Activated CD8-positive, alpha-beta T cell treated with anti-CD3 and anti-CD28 coated beads, Interleukin-2, amount 10 ng/mL, durations not matched to agents 7 days and 5 days (primary cell): ENCODE measurements at regions of chr12 and their contacts with region 1.

Region 1: GRCh38 chr12:3885277-3886094 is 12.3 kb upstream of the PARP11 start:
- DNase-seq: peak; percentile 65
- ATAC-seq: peak; percentile 43
- H3K4me3 Mint-ChIP-seq: no peak overlapping the region
- H3K27ac Mint-ChIP-seq: peak overlapping the region; percentile 8
- H3K4me1 Mint-ChIP-seq: peaks cover 12% of the 10 kb centered on the region
- H3K27me3 Mint-ChIP-seq: peaks cover 7% of the 10 kb centered on the region

Region 2: DNA sequence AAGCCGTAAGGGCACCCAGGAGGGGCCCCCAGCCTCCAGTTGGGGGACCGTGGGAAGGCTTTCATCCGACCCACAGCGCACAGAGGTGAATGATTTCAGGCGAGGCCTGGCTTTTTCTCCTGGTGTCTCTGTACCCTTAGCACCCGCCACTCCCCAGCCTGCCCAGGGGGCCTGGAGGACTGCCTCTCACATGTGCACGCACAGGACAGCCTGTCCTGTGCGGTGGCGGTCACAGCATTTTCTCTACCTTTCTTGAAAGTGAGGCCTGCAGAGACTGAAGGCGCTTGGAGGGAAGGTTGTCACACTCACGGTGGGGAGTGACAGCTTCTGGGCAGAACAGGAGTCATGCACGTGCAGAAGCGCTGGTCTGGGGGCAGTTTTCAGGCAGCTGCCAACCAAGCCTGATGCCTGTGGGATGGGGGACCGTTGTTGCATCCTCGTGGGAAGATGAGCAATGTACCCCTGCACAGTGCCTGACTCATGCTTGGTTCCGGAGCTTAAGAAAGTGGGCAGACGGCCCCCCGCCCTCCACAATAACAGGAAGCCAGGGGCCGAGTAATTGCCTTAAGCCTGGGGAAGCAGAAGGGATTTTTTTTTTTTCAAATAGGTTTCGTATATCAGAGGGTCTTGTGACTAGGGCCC is 660.2 kb before region 1 on chr12:
- CTCF ChIA-PET with region 1: no interaction called
- POLR2A ChIA-PET with region 1: no interaction called
- DNase-seq: no peak
- ATAC-seq: no peak
- H3K4me3 Mint-ChIP-seq: no peak overlapping the region
- H3K27ac Mint-ChIP-seq: no peak overlapping the region
- H3K4me1 Mint-ChIP-seq: peaks cover 3% of the 10 kb centered on the region
- H3K27me3 Mint-ChIP-seq: peaks cover 2% of the 10 kb centered on the region

Region 3: DNA sequence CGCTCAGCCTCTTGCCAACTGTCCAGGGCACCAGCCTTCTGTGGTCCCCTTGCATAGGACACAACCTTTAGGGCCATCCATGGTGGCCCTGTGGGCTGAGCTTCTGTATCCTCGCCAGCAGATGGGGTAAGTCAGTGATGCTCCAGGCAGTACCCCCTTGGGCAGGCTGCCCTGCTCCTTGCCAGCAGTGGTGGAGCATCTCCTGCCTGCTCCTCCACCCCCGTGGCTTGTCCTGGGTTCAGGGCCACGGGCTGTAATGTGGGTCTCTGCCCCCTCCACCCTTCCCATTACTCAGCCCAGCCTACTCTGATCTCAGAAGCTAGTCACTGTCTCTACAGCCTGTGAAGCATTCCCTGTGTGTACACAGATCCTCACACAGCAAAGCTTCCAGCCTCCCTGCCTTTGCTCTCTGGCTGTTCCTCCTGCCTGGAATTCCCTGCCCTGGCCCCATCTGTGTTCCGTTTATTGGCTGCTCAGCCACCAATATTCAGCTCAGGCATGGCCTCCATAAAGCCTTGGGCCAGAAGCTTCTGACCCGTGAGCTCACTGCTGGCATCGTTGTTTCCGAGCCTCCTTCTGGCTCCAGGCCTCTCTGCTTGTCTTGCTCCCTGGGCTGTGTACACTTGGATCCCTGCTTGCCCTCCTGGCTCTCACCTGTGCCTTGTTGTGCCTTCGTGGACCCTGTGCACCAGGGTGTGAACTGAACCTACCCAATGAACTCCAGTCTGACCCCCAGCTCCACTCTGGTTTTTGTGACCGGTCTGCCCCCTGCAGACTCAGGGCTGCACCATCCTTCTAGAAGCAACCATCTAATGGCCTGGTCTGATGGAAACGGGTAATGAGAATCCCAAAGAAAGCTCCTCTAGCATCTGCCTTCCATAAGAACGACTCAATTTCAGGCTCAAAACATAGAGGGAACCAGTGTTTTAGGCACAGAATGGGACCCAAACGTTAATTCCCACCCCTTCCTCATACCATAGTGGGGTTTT is 571.5 kb before region 1 on chr12:
- CTCF ChIA-PET with region 1: no interaction called
- POLR2A ChIA-PET with region 1: no interaction called
- DNase-seq: peak; percentile 28
- ATAC-seq: peak; percentile 85
- H3K4me3 Mint-ChIP-seq: no peak overlapping the region
- H3K27ac Mint-ChIP-seq: no peak overlapping the region
- H3K4me1 Mint-ChIP-seq: no peaks in the 10 kb centered on the region
- H3K27me3 Mint-ChIP-seq: peaks cover 2% of the 10 kb centered on the region

Region 4: GRCh38 chr12:3872800-3873636 is 12.5 kb before region 1 on chr12 and contains the start of gene PARP11:
- CTCF ChIA-PET with region 1: interaction called, 15 read pairs
- POLR2A ChIA-PET with region 1: no interaction called
- DNase-seq: peak; percentile 99
- ATAC-seq: peak; percentile 94
- H3K4me3 Mint-ChIP-seq: peak within 1 kb of the TSS; percentile 94
- H3K27ac Mint-ChIP-seq: peak within 1 kb of the TSS; percentile 97
- H3K4me1 Mint-ChIP-seq: peaks cover 41% of the 10 kb centered on the region
- H3K27me3 Mint-ChIP-seq: no peaks in the 10 kb centered on the region
- total RNA-seq, gene PARP11: 36.4 to 36.6 TPM

Region 5: DNA sequence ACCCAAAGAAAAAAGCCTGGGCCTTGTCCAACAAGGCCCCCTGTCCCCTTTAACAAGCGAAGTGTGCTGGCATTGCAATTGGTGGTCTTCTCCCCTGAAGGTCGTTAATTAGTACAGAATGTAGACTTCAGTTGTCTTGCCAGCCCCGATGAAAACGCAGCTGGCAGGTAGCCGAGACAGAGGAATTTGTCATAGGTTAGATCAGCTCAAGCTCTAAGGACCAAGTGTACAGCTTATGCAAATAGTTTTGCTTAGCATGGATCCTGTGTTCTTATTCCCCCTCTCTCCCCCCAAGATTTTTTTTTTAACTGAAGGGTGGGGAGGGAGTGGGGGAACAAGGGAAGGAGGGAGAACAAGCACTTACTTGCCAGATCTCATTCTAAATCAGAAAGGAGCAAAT is 46.3 kb after region 1 on chr12:
- CTCF ChIA-PET with region 1: interaction called, 16 read pairs
- POLR2A ChIA-PET with region 1: interaction called, 3 read pairs
- DNase-seq: no peak
- ATAC-seq: no peak
- H3K4me3 Mint-ChIP-seq: no peak overlapping the region
- H3K27ac Mint-ChIP-seq: no peak overlapping the region
- H3K4me1 Mint-ChIP-seq: peaks cover 53% of the 10 kb centered on the region
- H3K27me3 Mint-ChIP-seq: peaks cover 4% of the 10 kb centered on the region

Region 6: GRCh38 chr12:3988519-3989448 is 103.3 kb after region 1 on chr12:
- CTCF ChIA-PET with region 1: interaction called, 186 read pairs
- POLR2A ChIA-PET with region 1: interaction called, 3 read pairs
- DNase-seq: peak; percentile 48
- ATAC-seq: peak; percentile 82
- H3K4me3 Mint-ChIP-seq: peak overlapping the region; percentile 29
- H3K27ac Mint-ChIP-seq: peak overlapping the region; percentile 86
- H3K4me1 Mint-ChIP-seq: peaks cover 25% of the 10 kb centered on the region
- H3K27me3 Mint-ChIP-seq: peaks cover 7% of the 10 kb centered on the region

Region 7: DNA sequence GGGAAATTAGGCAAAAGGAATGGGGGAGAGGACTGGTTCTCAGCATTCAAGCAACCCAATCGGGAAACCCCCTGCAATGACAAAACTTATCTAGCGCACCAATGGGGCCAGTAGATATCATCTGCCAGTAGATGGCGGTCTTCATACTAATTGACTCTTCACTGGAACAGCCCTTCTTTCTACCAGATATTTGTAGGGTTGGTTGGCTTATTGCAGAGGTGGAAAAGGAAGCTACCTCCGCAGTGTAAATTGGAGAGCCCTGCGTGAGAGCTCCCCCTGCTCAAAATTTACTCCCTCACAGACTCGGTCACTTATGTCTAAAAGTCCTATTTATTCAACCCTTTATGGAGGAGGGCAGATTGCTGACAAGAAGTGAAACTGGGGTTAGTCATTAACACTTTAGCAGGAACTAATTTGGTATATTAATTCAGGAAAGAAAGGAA is 222.0 kb after region 1 on chr12:
- CTCF ChIA-PET with region 1: interaction called, 28 read pairs
- POLR2A ChIA-PET with region 1: interaction called, 3 read pairs
- DNase-seq: peak; percentile 89
- ATAC-seq: peak; percentile 93
- H3K4me3 Mint-ChIP-seq: peak overlapping the region; percentile 60
- H3K27ac Mint-ChIP-seq: peak overlapping the region; percentile 92
- H3K4me1 Mint-ChIP-seq: peaks cover 64% of the 10 kb centered on the region
- H3K27me3 Mint-ChIP-seq: peaks cover 2% of the 10 kb centered on the region

Region 8: GRCh38 chr12:4172999-4173398 is 287.5 kb after region 1 on chr12:
- CTCF ChIA-PET with region 1: no interaction called
- POLR2A ChIA-PET with region 1: no interaction called
- DNase-seq: peak; percentile 14
- ATAC-seq: no peak
- H3K4me3 Mint-ChIP-seq: no peak overlapping the region
- H3K27ac Mint-ChIP-seq: no peak overlapping the region
- H3K4me1 Mint-ChIP-seq: peaks cover 31% of the 10 kb centered on the region
- H3K27me3 Mint-ChIP-seq: no peaks in the 10 kb centered on the region

Region 9: GRCh38 chr12:4269279-4269991 is 383.9 kb after region 1 on chr12:
- CTCF ChIA-PET with region 1: interaction called, 242 read pairs
- POLR2A ChIA-PET with region 1: interaction called, 5 read pairs
- DNase-seq: peak; percentile 97
- ATAC-seq: peak; percentile 15
- H3K4me3 Mint-ChIP-seq: peak overlapping the region; percentile 99
- H3K27ac Mint-ChIP-seq: peak overlapping the region; percentile 98
- H3K4me1 Mint-ChIP-seq: peaks cover 21% of the 10 kb centered on the region
- H3K27me3 Mint-ChIP-seq: peaks cover 7% of the 10 kb centered on the region